ENCODE measurements at regions of chr6 and their contacts with region 1.

Region 1: GRCh38 chr6:43228951-43229802 is at the start of gene DNPH1:
- DNase-seq: peak; percentile 53 to 59
- ATAC-seq: peak; percentile 95 to 97
- H3K4me3 ChIP-seq: peak within 1 kb of the TSS; percentile 81
- H3K27ac ChIP-seq: peak within 1 kb of the TSS; percentile 90 to 97
- H3K4me1 ChIP-seq: peaks cover 3% of the 10 kb centered on the region; the same call in 1 of the 3 replicates
- CTCF ChIP-seq: peak; percentile 81
- EP300 ChIP-seq: no peak
- POLR2A ChIP-seq: peak; percentile 61
- RAD21 ChIP-seq: peak in 1 of 2 experiments; percentile 46; a peak in 4 of 5 replicates
- polyA plus RNA-seq, gene DNPH1: 51.4 and 63.2 TPM in 2 replicates

Region 2: GRCh38 chr6:43075670-43076463 is 153.3 kb before region 1 on chr6 and contains the start of gene PTK7:
- CTCF ChIA-PET with region 1: no interaction called
- POLR2A ChIA-PET with region 1: no interaction called
- DNase-seq: peak in 1 of 2 experiments; percentile 28
- ATAC-seq: peak; percentile 77 to 82
- H3K4me3 ChIP-seq: peak within 1 kb of the TSS; percentile 54
- H3K27ac ChIP-seq: peak within 1 kb of the TSS; percentile 57 to 86
- H3K4me1 ChIP-seq: peaks cover 6% of the 10 kb centered on the region; the same call in 2 of the 3 replicates
- CTCF ChIP-seq: no peak
- EP300 ChIP-seq: no peak
- POLR2A ChIP-seq: no peak; the same call in 1 of the 2 replicates
- RAD21 ChIP-seq: no peak
- polyA plus RNA-seq, gene PTK7: 2.8 and 3.4 TPM in 2 replicates

Region 3: DNA sequence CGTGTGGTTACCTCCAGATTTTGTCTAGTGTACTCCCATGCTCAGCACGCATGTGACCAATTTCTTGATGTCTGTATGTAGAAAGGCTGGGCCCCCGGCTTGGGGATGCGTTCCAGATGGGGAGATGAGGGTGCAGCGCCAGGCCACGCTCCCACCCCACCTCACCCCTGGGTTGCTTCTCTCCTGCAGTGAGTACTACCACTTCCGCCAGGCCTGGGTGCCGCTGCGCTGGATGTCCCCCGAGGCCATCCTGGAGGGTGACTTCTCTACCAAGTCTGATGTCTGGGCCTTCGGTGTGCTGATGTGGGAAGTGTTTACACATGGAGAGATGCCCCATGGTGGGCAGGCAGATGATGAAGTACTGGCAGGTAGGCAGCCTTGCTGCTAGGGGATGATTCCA is 69.6 kb before region 1 on chr6:
- CTCF ChIA-PET with region 1: no interaction called
- POLR2A ChIA-PET with region 1: no interaction called
- DNase-seq: no peak
- ATAC-seq: no peak
- H3K4me3 ChIP-seq: no peak overlapping the region
- H3K27ac ChIP-seq: no peak overlapping the region
- H3K4me1 ChIP-seq: no peaks in the 10 kb centered on the region
- CTCF ChIP-seq: no peak
- EP300 ChIP-seq: no peak
- POLR2A ChIP-seq: no peak
- RAD21 ChIP-seq: no peak

Region 4: GRCh38 chr6:43188431-43188830 is 40.7 kb before region 1 on chr6:
- CTCF ChIA-PET with region 1: interaction called, 10 read pairs
- POLR2A ChIA-PET with region 1: no interaction called
- DNase-seq: no peak
- ATAC-seq: no peak; a peak in 1 of 6 replicates
- H3K4me3 ChIP-seq: no peak overlapping the region
- H3K27ac ChIP-seq: no peak overlapping the region
- H3K4me1 ChIP-seq: no peaks in the 10 kb centered on the region; the same call in 2 of the 3 replicates
- CTCF ChIP-seq: no peak
- EP300 ChIP-seq: no peak
- POLR2A ChIP-seq: no peak
- RAD21 ChIP-seq: no peak

Region 5: DNA sequence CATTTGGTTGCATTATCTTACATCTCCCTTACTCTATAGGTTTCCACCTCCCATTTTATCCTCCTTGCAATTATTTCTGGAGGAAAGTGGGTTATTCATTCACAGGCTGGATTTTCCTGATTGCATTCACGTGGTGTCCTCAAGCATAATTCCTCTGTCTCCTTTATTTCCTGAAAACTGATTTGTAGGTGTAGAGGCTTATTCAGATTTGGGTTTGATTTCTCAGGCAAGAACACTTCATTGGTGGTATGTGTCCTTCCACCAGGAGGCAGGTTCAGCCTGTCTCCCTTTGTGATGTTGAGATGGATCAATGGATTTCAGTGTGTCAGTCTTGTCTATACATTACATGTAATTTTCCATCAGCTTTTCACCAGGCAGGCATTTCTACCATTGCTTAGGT is 17.2 kb before region 1 on chr6:
- CTCF ChIA-PET with region 1: interaction called, 38 read pairs
- POLR2A ChIA-PET with region 1: no interaction called
- DNase-seq: no peak
- ATAC-seq: no peak
- H3K4me3 ChIP-seq: no peak overlapping the region
- H3K27ac ChIP-seq: no peak overlapping the region
- H3K4me1 ChIP-seq: peaks cover 6% of the 10 kb centered on the region; the same call in 2 of the 3 replicates
- CTCF ChIP-seq: no peak
- EP300 ChIP-seq: no peak
- POLR2A ChIP-seq: no peak
- RAD21 ChIP-seq: no peak

Region 6: GRCh38 chr6:43242908-43243663 is 13.9 kb after region 1 on chr6 and contains the start of gene TTBK1:
- CTCF ChIA-PET with region 1: interaction called, 21 read pairs
- POLR2A ChIA-PET with region 1: interaction called, 3 read pairs
- DNase-seq: no peak
- ATAC-seq: peak in 1 of 2 experiments; percentile 23; a peak in 1 of 6 replicates
- H3K4me3 ChIP-seq: peak within 1 kb of the TSS; percentile 45
- H3K27ac ChIP-seq: 0 out of 6 replicates have a peak within 1 kb of the TSS, but pooled peaks of 1 of the 2 experiments have one; percentile 31
- H3K4me1 ChIP-seq: 0 out of 3 replicates have a peak, but pooled peaks cover 4% of the 10 kb centered on the region
- CTCF ChIP-seq: no peak
- EP300 ChIP-seq: no peak
- POLR2A ChIP-seq: no peak
- RAD21 ChIP-seq: no peak
- polyA plus RNA-seq, gene TTBK1: 0.03 TPM in 1 of 2 replicates, not detected in the other

Region 7: DNA sequence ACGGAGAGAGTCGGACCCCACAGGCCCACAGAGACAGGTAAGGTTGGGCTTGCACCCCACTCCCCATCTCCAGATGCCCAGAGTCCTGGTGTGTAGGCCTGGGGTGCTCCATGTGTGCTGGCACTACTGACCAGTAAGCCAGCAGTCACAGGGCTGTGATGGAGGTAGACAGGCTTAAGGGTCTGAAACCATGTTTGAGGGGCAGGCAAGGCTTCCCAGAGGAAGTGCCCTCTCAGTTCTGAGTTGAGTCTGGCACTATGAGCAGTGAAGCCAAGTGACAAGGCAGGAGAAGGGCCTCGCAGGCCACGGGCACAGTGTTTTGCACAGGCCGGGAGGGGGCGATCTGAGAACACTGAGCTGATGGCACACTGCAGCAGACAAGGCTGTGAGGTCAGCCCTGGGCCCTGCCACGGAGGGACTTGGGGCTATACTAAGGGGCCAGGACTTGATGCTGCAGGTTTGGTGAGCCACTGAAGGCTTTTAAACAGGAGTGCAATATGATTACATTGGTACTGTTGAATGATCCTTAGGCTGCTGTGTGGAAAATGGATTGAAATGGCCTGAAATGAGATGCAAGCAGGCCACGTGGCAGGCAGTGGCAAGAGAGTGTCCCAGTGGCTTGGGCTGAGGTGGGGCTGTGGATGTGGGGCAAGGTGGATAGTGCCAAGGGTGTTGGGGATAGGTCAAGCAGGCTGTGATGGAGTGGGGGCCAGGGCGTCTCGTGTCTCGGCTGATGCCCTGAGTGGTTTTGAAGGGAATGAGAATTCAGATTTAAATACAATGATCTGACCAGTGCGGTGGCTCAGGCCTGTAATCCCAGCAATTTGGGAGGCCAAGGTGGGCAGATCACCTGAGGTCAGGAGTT is 34.4 kb after region 1 on chr6:
- CTCF ChIA-PET with region 1: interaction called, 14 read pairs
- POLR2A ChIA-PET with region 1: no interaction called
- DNase-seq: peak; percentile 74 to 86
- ATAC-seq: peak; percentile 96 to 98
- H3K4me3 ChIP-seq: no peak overlapping the region
- H3K27ac ChIP-seq: 0 out of 6 replicates have a peak overlapping the region, but pooled peaks of 1 of the 2 experiments have one; percentile 28
- H3K4me1 ChIP-seq: peaks cover 7% of the 10 kb centered on the region; the same call in 1 of the 3 replicates
- CTCF ChIP-seq: peak; percentile 73
- EP300 ChIP-seq: no peak
- POLR2A ChIP-seq: no peak
- RAD21 ChIP-seq: peak; percentile 87 to 90

Region 8: DNA sequence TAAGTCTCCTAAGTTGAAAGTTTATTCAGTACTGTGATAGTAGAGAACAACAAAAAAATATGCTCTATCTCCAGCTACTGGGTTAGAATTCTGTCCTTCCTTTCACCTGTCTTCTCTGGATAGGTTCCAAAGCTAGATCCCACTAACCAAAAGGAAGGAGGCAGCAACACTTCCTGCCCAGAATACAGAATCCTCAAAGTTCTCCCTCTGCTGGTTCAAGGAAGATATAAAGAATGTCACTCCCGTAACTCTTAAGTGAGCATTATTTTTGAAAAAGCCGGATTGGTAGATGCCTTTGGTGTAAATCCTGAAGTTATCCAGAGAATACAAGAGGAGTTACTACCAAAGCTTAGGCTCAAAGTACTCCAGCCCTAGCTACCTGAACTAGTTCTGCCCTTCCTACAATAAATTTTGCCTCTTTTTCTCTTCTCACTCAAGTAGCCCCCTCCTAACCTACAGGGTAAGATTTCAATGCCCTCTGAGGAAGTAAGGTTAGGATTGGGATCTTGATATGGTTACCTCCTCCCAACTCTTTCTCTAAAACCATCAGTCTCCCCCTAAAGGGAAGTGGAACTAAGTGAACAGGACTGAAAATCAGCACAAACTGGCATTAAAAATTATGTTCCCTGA is 105.4 kb after region 1 on chr6:
- CTCF ChIA-PET with region 1: interaction called, 11 read pairs
- POLR2A ChIA-PET with region 1: no interaction called
- DNase-seq: peak; percentile 25 to 62
- ATAC-seq: peak; percentile 81 to 90; a peak in 5 of 6 replicates
- H3K4me3 ChIP-seq: no peak overlapping the region
- H3K27ac ChIP-seq: no peak overlapping the region
- H3K4me1 ChIP-seq: no peaks in the 10 kb centered on the region
- CTCF ChIP-seq: peak; percentile 59
- EP300 ChIP-seq: no peak
- POLR2A ChIP-seq: no peak
- RAD21 ChIP-seq: peak; percentile 45 to 54; a peak in 4 of 5 replicates

Region 9: GRCh38 chr6:43421831-43422230 is 192.7 kb after region 1 on chr6:
- CTCF ChIA-PET with region 1: no interaction called
- POLR2A ChIA-PET with region 1: no interaction called
- DNase-seq: no peak
- ATAC-seq: no peak
- H3K4me3 ChIP-seq: no peak overlapping the region
- H3K27ac ChIP-seq: no peak overlapping the region
- H3K4me1 ChIP-seq: peaks cover under 1% of the 10 kb centered on the region; the same call in 2 of the 3 replicates
- CTCF ChIP-seq: no peak
- EP300 ChIP-seq: no peak
- POLR2A ChIP-seq: no peak
- RAD21 ChIP-seq: no peak